AG04450 (cell line): ENCODE measurements at regions of chr2 and their contacts with region 1.

Region 1: DNA sequence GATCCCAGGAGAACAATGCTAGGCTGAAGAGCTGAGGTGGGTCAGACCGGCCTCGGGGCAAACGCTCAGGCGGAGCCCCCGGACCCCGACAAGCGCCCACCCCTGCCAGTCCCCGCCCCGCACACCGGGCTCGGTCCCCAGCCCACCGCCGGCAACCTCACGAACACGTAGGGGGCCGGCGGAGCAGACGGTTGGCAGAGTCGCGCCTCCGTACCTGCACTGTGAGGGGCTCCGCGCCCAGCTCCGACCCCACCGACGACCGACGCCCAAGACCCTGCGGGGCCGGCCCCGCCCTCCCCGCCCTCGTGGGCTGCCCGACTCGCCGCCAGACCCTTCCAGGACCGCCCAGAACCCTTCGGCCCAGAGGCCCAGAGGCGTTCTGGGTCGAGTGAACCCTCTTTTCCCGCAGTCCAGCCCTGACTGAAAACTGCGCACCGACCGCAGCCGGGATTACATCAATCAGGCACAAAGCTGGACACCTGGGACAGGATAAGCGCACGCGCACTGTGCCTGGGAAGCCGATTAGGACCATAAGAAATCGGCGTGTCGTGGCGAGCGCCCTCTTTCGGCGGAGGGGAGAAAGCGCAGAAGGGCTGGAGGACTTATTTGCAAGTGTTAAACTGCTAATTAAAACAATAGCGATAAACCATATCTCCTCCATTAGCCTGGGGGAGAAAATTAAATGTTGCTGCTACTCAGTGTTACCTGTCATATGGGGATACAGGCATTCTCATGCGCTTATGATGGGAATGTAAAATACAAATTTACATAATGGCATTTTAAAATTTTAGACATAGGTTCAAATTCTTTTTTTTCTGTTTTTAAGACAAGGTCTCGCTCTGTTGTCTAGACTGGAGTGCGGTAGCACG is 11.7 kb upstream of the DCTN1 start:
- DNase-seq: peak; percentile 72
- H3K4me3 ChIP-seq: peak overlapping the region; percentile 92
- H3K27ac ChIP-seq: peak overlapping the region; percentile 78
- H3K27me3 ChIP-seq: no peaks in the 10 kb centered on the region
- CTCF ChIP-seq: peak; percentile 98

Region 2: GRCh38 chr2:74328074-74328473 is 63.7 kb before region 1 on chr2:
- CTCF ChIA-PET with region 1: no interaction called
- POLR2A ChIA-PET with region 1: no interaction called
- DNase-seq: no peak
- H3K4me3 ChIP-seq: no peak overlapping the region
- H3K27ac ChIP-seq: no peak overlapping the region
- H3K27me3 ChIP-seq: peaks cover 16% of the 10 kb centered on the region
- CTCF ChIP-seq: no peak

Region 3: DNA sequence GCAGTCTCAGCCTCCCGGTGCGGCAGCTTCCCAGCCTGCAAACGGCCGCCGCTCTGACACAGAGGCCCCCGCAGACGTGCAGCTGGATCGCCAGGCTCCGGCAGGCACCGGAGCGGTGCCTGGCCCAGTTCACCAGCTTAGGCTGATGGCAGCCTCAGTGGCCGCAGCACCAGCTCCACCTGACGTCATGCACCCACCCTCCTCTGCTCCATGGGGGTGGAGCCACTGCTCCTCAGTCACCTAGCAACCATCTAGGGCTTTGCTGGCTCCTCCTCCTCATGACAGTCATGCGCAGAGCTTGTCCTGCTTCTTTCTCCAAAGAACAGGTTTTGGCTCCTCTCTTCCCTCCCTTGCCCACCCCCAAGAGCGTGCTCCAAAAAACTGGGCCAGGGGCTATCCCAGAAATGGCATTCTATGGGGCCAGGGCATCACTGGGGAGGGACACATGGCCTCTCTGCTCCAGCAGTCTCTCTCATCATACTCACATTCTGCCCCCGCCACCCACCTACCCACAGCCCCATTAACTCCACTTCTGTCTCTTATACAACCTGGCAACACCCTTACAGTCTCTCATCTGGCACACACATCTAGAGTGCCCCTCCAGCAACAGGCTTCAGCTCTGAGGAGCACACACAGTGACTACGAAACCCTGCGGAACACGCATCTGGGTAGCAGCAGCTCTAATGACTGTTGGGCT is 17.2 kb before region 1 on chr2:
- CTCF ChIA-PET with region 1: interaction called, 11 read pairs
- POLR2A ChIA-PET with region 1: interaction called, 7 read pairs
- DNase-seq: peak; percentile 24
- H3K4me3 ChIP-seq: peak overlapping the region; percentile 35
- H3K27ac ChIP-seq: no peak overlapping the region
- H3K27me3 ChIP-seq: no peaks in the 10 kb centered on the region
- CTCF ChIP-seq: no peak

Region 4: DNA sequence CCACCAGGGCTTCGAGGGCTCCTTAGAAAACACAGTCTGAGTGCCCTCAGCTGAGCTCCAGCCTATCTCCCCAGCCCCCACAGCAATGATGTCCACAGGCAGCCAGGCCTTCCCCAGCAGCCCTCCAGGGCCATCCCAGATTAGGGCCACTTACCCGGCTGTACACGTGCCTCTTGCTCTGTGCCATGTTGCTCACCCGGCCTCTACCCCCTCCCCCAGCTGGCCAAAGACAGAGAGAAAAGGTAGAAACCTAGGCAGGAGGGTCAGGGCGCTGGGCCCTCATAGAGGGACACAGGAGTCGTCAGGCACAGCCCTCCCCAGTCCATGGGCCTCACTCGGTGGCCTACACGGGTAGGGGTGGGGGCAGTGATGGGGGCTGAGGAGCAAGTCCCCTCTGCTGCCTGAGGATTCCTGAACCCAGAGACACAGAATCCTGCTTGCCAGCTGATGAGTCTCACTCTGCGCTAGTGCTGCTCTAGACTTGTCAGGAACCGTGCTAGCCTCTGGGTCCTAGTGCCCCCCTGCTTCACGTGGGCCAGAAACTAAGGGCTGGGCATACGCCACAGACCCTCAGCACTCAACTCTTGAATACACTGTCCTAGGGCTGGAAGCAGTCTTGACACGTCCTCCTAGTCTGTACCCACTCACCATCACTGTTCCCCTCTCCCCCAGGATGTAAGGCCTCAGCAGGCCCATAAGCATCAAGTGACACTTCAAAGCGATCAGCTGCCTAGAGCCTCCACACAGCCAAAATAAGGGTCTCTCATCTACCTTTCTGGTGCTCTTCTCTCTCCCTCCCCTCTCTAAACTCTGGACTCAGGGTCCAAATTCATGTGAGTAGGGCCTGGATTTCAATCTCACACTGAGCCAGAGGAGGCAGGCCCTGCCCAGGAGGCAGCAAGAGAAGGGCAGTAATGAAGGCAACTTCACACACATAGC is 11.7 kb before region 1 on chr2 and contains the start of gene DCTN1:
- CTCF ChIA-PET with region 1: interaction called, 36 read pairs
- POLR2A ChIA-PET with region 1: interaction called, 7 read pairs
- DNase-seq: peak; percentile 45
- H3K4me3 ChIP-seq: peak within 1 kb of the TSS; percentile 72
- H3K27ac ChIP-seq: peak within 1 kb of the TSS; percentile 68
- H3K27me3 ChIP-seq: no peaks in the 10 kb centered on the region
- CTCF ChIP-seq: no peak
- polyA plus RNA-seq, gene DCTN1: 147 and 188 TPM in 2 replicates